HepG2 (cell line): ENCODE measurements at regions of chr11 and their contacts with region 1.

Region 1: GRCh38 chr11:47373876-47374720 is 4.2 kb downstream of the SPI1 start:
- DNase-seq: peak; percentile 60
- ATAC-seq: peak; percentile 93
- H3K4me3 ChIP-seq: no peak overlapping the region
- H3K27ac ChIP-seq: no peak overlapping the region
- H3K4me1 ChIP-seq: peaks cover 12% of the 10 kb centered on the region; the same call in 1 of the 2 replicates
- H3K27me3 ChIP-seq: peaks cover 2% of the 10 kb centered on the region in 2 experiments; a peak in 1 of 5 replicates
- CTCF ChIP-seq: peak; percentile 95
- EP300 ChIP-seq: no peak
- POLR2A ChIP-seq: no peak
- RAD21 ChIP-seq: peak; percentile 85

Region 2: GRCh38 chr11:47269002-47269828 is 104.9 kb before region 1 on chr11:
- CTCF ChIA-PET with region 1: no interaction called
- POLR2A ChIA-PET with region 1: no interaction called
- in situ Hi-C with region 1: no loop called
- intact Hi-C with region 1: no loop called
- DNase-seq: peak; percentile 94
- ATAC-seq: peak; percentile 76
- H3K4me3 ChIP-seq: peak overlapping the region; percentile 70 to 92 (median 82)
- H3K27ac ChIP-seq: peak overlapping the region; percentile 88
- H3K4me1 ChIP-seq: peaks cover 57% of the 10 kb centered on the region
- H3K27me3 ChIP-seq: no peaks in the 10 kb centered on the region
- CTCF ChIP-seq: peak; percentile 15
- EP300 ChIP-seq: peak in 1 of 2 experiments; percentile 19; a peak in 1 of 4 replicates
- POLR2A ChIP-seq: peak in 1 of 2 experiments; percentile 17; a peak in 1 of 4 replicates
- RAD21 ChIP-seq: no peak

Region 3: DNA sequence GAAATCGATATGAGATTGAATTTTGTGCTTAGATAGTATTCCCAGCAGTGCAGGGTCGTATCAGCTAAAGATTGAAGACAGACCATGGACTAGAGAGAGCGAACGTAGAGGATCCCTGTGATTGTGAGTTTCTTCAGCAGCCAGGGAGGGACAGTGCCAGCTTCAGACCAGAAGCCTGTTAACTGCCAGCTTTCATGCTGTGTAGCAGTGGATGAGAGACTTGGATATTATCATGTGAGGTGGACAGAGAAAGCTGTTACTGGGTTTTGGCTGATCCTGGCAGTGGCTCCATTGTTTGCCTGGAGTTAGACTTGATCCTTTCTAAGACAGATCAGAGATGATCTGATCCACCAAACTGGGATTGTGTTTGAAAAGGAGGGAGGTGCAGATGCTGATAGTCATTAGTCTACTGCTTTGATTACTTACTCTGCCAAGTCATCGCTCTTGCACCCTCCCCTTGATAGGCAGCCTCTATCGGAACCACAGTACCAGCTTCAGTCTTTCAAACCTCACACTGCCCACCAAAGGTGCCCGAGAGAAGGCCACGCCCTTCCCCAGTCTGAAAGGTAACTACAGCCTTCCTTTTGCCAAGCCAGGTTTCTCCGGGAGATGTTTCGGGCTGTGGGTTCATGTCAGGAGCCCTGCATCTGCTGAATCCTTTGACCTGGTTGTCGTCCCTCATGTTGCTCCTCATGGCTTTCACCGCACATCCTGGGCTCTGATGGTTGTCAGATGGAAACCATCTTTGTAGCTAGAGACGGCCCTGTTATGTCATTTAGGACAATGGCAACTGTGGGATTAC is 87.9 kb before region 1 on chr11:
- CTCF ChIA-PET with region 1: no interaction called
- POLR2A ChIA-PET with region 1: no interaction called
- in situ Hi-C with region 1: no loop called
- intact Hi-C with region 1: no loop called
- DNase-seq: no peak
- ATAC-seq: no peak
- H3K4me3 ChIP-seq: no peak overlapping the region
- H3K27ac ChIP-seq: no peak overlapping the region
- H3K4me1 ChIP-seq: peaks cover 9% of the 10 kb centered on the region
- H3K27me3 ChIP-seq: no peaks in the 10 kb centered on the region
- CTCF ChIP-seq: no peak
- EP300 ChIP-seq: no peak
- POLR2A ChIP-seq: no peak
- RAD21 ChIP-seq: no peak

Region 4: DNA sequence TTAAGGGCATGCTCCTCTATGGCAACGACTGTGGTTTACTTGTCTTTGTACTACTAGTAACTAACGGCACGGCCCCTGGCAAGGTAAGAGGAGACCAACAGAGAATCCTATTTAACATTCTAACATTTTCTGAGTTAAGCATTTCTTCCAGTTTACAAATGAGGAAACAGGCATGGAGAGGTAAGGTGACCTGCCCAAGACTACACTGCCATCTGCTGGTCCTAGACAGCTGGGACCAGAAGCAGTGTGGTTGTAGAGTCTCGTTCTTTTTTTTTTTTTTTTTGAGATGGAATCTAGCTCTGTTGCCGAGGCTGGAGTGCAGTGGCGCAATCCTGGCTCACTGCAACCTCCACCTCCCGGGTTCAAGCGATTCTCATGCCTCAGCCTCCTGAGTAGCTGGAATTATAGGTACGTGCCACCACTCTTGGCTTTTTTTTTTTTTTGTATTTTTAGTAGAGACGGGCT is 80.1 kb after region 1 on chr11:
- CTCF ChIA-PET with region 1: interaction called, 9 read pairs
- POLR2A ChIA-PET with region 1: no interaction called
- in situ Hi-C with region 1: loop called (anchors 10 kb)
- intact Hi-C with region 1: loop called (anchors 1 kb)
- DNase-seq: peak; percentile 85
- ATAC-seq: peak; percentile 87
- H3K4me3 ChIP-seq: no peak overlapping the region
- H3K27ac ChIP-seq: no peak overlapping the region
- H3K4me1 ChIP-seq: peaks cover 5% of the 10 kb centered on the region
- H3K27me3 ChIP-seq: no peaks in the 10 kb centered on the region
- CTCF ChIP-seq: peak; percentile 92
- EP300 ChIP-seq: no peak
- POLR2A ChIP-seq: no peak
- RAD21 ChIP-seq: peak; percentile 79

Region 5: DNA sequence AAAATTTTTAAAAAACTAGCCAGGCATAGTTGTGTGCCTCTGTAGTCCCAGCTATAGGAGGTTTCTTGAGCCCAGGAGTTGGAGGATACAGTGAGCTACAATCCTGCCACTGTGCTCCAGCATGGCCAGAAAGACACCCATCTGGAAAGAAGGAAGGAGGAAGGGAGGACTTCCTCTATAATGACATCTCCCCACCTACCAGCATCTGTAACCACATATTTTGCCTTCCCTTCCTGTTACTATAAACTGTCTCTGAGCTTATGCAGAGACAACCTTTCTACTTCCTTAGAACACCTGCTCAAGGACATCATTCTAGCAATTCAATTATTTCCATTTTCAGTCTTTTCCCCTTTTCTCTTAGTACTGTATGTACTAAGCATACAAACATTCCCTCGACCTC is 476.2 kb after region 1 on chr11:
- CTCF ChIA-PET with region 1: no interaction called
- POLR2A ChIA-PET with region 1: no interaction called
- in situ Hi-C with region 1: no loop called
- intact Hi-C with region 1: loop called (anchors 5 kb)
- DNase-seq: no peak
- ATAC-seq: no peak
- H3K4me3 ChIP-seq: no peak overlapping the region
- H3K27ac ChIP-seq: no peak overlapping the region
- H3K4me1 ChIP-seq: peaks cover 43% of the 10 kb centered on the region
- H3K27me3 ChIP-seq: no peaks in the 10 kb centered on the region; a peak in 2 of 5 replicates
- CTCF ChIP-seq: no peak
- EP300 ChIP-seq: no peak
- POLR2A ChIP-seq: no peak
- RAD21 ChIP-seq: no peak